Left ventricle myocardium superior (tissue), 1 donor: ENCODE measurements at regions of chr18 and their contacts with region 1.

Region 1: GRCh38 chr18:32261003-32261402 is 71.2 kb downstream of the MEP1B start:
- DNase-seq: no peak
- ATAC-seq: no peak

Region 2: GRCh38 chr18:32167975-32168730 is 92.8 kb before region 1 on chr18:
- intact Hi-C with region 1: loop called (anchors 10 kb)
- DNase-seq: no peak
- ATAC-seq: no peak

Region 3: DNA sequence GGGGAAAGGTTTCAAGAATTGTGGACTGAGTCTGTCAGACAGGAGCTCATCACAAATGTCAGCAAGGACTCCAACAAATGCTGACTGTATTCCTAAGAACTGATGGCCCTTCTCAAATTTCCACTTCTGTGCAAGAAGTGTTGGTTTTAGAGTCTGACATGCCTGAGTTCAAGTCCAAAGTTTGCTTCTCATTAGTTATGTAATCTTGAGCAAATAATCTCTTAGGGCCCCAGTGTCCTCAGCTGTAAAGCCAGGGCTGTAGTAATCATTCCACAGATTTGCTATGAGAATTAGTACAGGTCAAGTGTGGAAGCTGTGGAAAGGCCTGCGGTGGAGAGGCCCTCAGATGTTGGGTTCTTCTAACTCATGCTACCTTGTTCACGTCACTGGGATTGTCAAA is 47.3 kb before region 1 on chr18:
- intact Hi-C with region 1: no loop called
- DNase-seq: no peak
- ATAC-seq: no peak